ENCODE measurements at regions of chr10 and their contacts with region 1.

Region 1: GRCh38 chr10:36053775-36054174 is 411.7 kb upstream of the FZD8 start:
- DNase-seq: no peak
- H3K4me3 ChIP-seq: no peak overlapping the region
- H3K27ac ChIP-seq: no peak overlapping the region
- H3K4me1 ChIP-seq: no peaks in the 10 kb centered on the region
- H3K27me3 ChIP-seq: peaks cover 0 to 7% of the 10 kb centered on the region in 2 experiments
- CTCF ChIP-seq: no peak
- POLR2A ChIP-seq: no peak

Region 2: DNA sequence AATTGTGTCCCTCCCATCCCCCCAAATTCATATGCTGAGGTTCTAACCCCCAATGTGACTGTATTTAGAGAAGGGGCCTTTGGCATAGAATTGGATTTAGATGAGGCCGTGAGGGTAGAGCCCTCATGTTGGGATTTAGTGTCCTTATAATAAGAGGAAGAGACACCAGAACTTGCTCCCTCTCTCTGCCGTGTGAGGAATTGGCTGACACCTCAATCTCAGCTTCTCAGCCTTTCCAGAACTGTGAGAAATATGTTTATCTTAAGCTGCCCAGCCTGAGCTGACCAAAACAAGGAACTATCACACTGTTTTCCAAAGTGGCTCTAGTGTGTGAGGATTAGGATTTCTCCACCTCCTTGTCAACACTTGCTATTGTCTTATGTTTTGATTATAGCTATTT is 11.6 kb before region 1 on chr10:
- CTCF ChIA-PET with region 1: no interaction called
- POLR2A ChIA-PET with region 1: no interaction called
- dilution Hi-C with region 1: no loop called
- intact Hi-C with region 1: no loop called
- DNase-seq: no peak
- H3K4me3 ChIP-seq: no peak overlapping the region
- H3K27ac ChIP-seq: no peak overlapping the region
- H3K4me1 ChIP-seq: no peaks in the 10 kb centered on the region
- H3K27me3 ChIP-seq: peaks cover 0 to 3% of the 10 kb centered on the region in 2 experiments
- CTCF ChIP-seq: no peak
- POLR2A ChIP-seq: no peak

Region 3: GRCh38 chr10:36073796-36074345 is 20.1 kb after region 1 on chr10:
- CTCF ChIA-PET with region 1: no interaction called
- POLR2A ChIA-PET with region 1: no interaction called
- dilution Hi-C with region 1: no loop called
- intact Hi-C with region 1: loop called (anchors 2 kb)
- DNase-seq: no peak
- H3K4me3 ChIP-seq: no peak overlapping the region
- H3K27ac ChIP-seq: no peak overlapping the region
- H3K4me1 ChIP-seq: no peaks in the 10 kb centered on the region
- H3K27me3 ChIP-seq: peaks cover 0 to 11% of the 10 kb centered on the region in 2 experiments
- CTCF ChIP-seq: no peak
- POLR2A ChIP-seq: no peak

Region 4: DNA sequence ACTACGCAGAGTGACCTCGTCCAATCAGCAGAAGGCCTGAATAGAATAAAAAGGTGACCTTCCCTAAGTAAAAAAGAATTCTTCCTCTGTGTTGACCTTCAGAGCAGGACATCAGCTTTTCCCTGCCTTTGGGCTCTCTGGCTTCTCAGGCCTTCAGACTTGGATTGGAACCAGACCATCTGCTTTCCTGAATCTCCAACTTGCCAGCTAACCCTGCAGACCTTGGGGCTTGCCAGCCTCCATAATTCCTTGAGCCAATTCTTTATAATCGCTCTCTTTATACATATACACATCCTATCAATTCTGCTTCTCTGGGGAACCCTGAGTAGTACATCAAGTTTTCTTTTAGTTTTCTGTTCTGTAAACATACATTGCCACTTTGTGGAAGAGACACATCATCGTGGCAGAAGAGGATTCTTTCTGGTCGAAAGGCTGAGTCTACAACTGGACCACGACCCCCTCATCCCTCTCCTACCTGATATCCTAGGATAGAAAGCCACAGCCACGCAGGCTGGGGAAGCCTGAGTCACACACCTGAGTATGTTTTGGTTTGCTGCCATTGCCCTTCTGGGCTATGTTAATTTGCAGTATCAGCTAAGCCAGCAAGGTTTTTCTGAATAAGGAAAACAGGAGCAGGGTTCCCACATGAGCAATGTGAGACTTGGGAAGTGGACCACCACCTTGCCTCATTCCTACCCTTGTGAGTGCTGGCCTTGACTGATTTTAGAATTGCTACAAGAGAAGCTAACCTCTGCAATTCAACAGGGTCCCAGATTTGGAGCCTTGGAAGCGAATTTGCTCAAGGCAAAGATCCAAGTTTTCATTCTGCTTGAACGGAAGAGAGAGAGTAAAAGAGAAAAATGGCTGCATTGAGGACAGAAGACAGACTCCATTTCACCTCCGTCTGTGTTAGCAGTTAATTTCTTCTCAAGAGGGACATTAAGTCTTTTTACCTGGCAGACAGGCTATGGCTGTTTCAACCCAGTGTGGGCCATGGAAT is 33.5 kb after region 1 on chr10:
- CTCF ChIA-PET with region 1: no interaction called
- POLR2A ChIA-PET with region 1: no interaction called
- dilution Hi-C with region 1: no loop called
- intact Hi-C with region 1: no loop called
- DNase-seq: no peak
- H3K4me3 ChIP-seq: no peak overlapping the region
- H3K27ac ChIP-seq: no peak overlapping the region
- H3K4me1 ChIP-seq: no peaks in the 10 kb centered on the region
- H3K27me3 ChIP-seq: no peaks in the 10 kb centered on the region
- CTCF ChIP-seq: no peak
- POLR2A ChIP-seq: no peak